Adrenal gland (tissue), 19 donors: ENCODE measurements at regions of chr6 and their contacts with region 1.

Region 1: DNA sequence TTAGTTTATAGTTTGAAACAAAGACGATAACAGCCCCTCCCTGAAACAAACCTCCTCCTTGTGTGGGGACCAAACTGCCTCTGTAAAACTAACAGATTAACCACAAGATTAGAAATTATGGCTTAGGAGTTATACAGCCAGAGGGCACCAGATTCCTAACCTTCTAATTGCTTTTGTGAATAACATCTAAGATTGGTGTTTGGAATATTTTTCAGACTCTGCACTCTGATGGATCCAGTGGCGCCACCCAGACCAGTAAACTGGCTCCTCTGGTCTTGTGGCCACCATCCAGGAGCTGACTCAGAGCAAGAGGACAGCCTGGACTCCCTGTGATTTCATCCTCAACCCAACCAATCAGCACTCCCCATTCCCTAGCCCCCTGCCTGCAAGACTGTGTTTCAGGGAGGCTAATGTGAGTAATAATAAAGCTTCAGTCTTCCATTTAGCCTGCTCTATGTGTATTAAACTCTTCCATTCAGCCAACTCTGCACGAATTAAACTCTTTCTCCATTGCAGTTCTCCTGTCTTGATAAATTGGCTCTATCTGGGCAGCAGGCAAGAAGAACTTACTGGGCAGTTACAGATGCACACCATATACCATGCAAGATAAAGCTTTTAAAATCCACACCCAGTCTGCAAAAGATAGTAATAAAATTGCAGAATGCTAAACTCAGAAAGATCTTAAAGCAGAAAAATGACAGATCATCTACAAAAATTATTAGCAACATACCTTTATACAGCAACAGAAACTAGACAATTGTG is 58.5 kb upstream of the SLC22A16 start:
- DNase-seq: peak in 4 of 7 donors; percentile 27 to 45 (median 34)
- H3K4me3 ChIP-seq: no peak overlapping the region
- H3K27ac ChIP-seq: no peak overlapping the region
- H3K4me1 ChIP-seq: peaks cover 0 to 7% of the 10 kb centered on the region in 2 donors
- H3K27me3 ChIP-seq: no peaks in the 10 kb centered on the region
- CTCF ChIP-seq: no peak
- POLR2A ChIP-seq: no peak

Region 2: GRCh38 chr6:110033101-110033500 is 501.8 kb before region 1 on chr6:
- intact Hi-C with region 1: no loop called
- DNase-seq: no peak
- H3K4me3 ChIP-seq: no peak overlapping the region
- H3K27ac ChIP-seq: no peak overlapping the region
- H3K4me1 ChIP-seq: no peaks in the 10 kb centered on the region
- H3K27me3 ChIP-seq: no peaks in the 10 kb centered on the region
- CTCF ChIP-seq: no peak
- POLR2A ChIP-seq: no peak

Region 3: DNA sequence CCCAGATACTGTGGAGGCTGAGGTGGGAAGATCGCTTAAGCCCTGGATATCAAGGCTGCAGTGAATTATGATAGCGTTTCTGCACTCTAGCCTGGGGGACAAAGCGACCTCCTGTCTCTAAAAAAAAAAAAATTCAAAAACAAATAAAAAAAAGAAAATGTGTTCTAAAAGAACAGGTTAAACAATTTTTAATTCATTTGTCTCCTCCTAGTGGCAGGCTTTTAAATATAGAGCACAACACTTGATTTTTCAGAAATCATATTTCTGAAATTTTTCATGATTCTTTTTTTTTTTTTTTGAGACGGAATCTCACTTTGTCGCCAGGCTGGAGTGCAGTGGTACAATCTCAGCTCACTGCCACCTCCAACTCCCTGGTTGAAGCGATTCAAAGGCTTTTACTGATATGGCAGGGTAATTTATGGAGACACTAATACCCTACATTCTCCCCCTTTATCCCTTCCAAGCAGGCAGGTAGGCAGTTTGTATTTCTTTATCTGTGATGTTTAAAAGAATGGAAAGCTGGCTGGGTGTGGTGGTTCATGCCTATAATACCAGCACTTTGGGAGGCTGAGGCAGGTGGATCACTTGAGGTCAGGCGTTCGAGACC is 414.9 kb after region 1 on chr6:
- intact Hi-C with region 1: loop called in 1 of 2 experiments (anchors 5 kb)
- DNase-seq: no peak
- H3K4me3 ChIP-seq: no peak overlapping the region
- H3K27ac ChIP-seq: no peak overlapping the region
- H3K4me1 ChIP-seq: no peaks in the 10 kb centered on the region
- H3K27me3 ChIP-seq: no peaks in the 10 kb centered on the region
- CTCF ChIP-seq: peak; percentile 34 to 86 (median 60)
- POLR2A ChIP-seq: no peak